Motor neuron (in vitro differentiated cells): ENCODE measurements at regions of chr2 and their contacts with region 1.

Region 1: DNA sequence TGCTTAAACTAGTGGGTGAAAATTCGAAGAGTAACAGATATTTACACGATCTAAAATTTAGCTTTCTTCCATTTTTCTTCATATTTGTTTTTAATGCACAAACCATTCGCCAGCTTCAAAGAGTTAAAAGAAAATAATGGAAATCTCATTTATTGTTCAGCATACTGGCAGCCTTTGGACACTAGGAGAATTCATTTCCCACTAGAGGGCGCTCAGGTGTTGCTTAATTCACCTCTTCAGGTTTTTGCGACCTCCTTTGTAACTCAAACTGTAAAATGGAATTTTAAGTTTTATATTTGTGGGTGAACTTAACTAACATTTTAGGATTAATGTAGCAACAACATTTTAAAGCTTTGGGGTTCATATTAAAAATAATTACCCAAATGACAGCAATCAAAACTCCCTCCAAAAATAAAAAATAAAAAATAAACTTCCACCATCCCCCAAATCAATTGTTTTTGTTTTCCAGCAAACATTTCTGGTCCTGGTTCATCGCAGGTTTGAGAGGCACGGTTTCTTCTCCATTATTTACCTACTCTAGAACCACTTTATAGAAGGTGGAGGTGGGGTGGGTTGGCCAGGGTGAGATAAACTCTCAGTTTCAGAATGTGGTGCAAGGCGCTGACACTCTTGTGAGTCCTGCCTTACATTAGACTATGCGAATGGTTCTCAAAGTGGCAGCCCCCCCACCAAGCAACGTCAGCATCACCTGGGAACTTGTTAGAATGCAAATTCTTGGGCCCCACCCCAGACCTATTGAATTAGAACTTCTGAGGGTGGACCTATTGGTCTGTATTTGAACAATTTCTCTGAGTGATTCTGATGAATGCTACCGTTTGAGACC is 24.7 kb upstream of the PNPT1 start:
- ATAC-seq: peak in 5 of 8 experiments; percentile 38 to 77 (median 66)
- H3K4me3 ChIP-seq: no peak overlapping the region
- H3K27ac ChIP-seq: no peak overlapping the region
- H3K4me1 ChIP-seq: no peaks in the 10 kb centered on the region

Region 2: GRCh38 chr2:56009758-56010458 is 291.5 kb after region 1 on chr2:
- in situ Hi-C with region 1: loop called in 3 of 9 experiments (anchors 10 to 25 kb)
- ATAC-seq: no peak
- H3K4me3 ChIP-seq: no peak overlapping the region
- H3K27ac ChIP-seq: no peak overlapping the region
- H3K4me1 ChIP-seq: peaks cover 27 to 40% of the 10 kb centered on the region in 2 donors

Region 3: DNA sequence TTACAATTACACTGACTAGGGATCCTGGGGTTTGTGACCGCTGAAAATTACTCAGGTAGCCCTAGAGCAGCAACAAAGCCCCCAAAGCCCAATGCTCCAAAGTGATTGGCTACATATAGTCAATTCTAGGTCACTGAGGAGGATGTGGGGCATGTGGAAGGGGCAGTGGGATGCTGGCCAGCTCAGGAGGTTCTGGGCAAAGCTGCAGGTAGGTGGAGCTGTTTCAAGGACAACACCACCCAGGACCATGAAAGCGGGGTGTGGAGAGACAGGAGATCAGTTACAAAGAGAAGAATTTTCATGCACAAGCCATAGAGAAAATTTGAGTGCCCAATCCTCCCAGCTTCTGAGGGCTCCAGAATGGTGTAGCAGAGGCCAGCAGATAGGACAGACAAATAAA is 390.4 kb after region 1 on chr2:
- in situ Hi-C with region 1: loop called in 1 of 9 experiments (anchors 25 kb)
- ATAC-seq: peak in 1 of 8 experiments; percentile 14
- H3K4me3 ChIP-seq: no peak overlapping the region
- H3K27ac ChIP-seq: peak overlapping the region in 1 of 2 donors; percentile 27
- H3K4me1 ChIP-seq: peaks cover 40% of the 10 kb centered on the region in 2 donors

Region 4: DNA sequence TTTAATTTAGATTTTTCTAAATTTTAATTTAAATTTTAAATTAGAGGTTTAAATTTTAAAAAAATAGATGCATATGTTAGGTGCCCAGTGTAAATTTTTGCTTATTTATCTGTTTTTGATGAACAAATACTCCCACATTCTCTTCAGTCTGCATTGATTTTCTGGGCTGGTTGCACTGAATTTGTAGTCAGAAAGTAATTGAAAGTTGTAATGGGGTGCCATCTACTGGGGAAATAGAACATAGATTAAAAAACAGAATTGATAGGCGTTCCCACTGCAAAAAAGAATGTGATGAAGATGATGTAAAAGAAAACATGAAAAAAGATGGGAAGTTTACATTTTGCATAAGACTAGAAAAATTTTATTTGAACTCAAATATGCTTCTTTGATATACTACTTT is 413.8 kb after region 1 on chr2:
- in situ Hi-C with region 1: loop called in 7 of 9 experiments (anchors 10 to 25 kb)
- ATAC-seq: peak in 3 of 8 experiments; percentile 25 to 53 (median 34)
- H3K4me3 ChIP-seq: no peak overlapping the region
- H3K27ac ChIP-seq: no peak overlapping the region
- H3K4me1 ChIP-seq: peaks cover 14 to 16% of the 10 kb centered on the region in 2 donors